ENCODE measurements at regions of chr6 and their contacts with region 1.

Region 1: DNA sequence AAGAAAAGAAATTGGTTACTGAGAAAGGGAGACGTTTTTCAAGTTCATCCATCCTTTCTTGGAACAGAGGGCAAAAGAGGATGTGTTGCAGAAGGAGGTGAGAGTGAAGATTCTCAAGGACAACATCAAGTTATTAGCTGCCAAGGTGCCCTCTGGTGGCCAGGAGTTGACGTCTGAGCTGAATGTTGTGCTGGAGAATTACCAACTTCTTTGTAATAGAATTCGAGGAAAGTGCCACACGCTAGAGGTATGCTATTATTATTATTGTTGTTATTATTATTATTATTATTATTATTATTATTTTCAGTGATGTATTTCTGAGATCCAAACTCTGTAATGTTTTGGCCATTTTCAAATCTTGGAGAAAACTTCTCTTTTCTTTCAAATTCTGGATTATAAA is 197.0 kb downstream of the UTRN start:
- DNase-seq: peak; percentile 66
- H3K4me3 Mint-ChIP-seq: no peak overlapping the region
- H3K27ac Mint-ChIP-seq: no peak overlapping the region
- H3K4me1 Mint-ChIP-seq: no peaks in the 10 kb centered on the region
- H3K27me3 Mint-ChIP-seq: no peaks in the 10 kb centered on the region
- CTCF ChIP-seq: peak; percentile 42

Region 2: DNA sequence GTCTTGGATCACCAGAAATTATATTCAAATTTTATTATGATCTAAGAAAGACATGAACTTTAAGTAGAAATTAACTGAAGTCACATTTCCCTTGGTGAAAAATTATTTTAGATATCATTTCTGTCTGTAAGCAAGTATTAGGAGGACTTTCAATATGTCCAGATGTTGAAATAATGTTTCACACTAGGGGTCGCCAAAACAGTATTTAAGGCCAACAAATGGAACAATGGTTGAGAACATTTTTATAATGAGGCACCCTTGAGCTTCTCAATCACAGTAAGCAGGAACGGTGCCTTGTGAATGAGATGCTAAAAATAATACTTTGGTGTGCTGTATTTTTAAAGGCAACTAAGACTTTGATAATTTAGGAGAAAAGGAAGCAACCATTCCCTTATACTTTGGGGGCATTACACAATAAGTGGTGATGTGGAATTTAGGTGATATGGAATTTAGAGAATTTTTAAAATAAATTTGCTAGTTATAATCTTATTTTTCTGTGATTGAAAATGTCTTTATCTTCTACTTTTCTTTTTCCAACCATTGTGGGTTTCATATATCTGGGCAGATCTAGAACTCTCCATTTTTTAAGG is 377.1 kb before region 1 on chr6:
- CTCF ChIA-PET with region 1: interaction called, 7 read pairs
- intact Hi-C with region 1: loop called (anchors 2 kb)
- DNase-seq: peak; percentile 48
- H3K4me3 Mint-ChIP-seq: no peak overlapping the region
- H3K27ac Mint-ChIP-seq: peak overlapping the region; percentile 56
- H3K4me1 Mint-ChIP-seq: peaks cover 8% of the 10 kb centered on the region
- H3K27me3 Mint-ChIP-seq: no peaks in the 10 kb centered on the region
- CTCF ChIP-seq: no peak

Region 3: DNA sequence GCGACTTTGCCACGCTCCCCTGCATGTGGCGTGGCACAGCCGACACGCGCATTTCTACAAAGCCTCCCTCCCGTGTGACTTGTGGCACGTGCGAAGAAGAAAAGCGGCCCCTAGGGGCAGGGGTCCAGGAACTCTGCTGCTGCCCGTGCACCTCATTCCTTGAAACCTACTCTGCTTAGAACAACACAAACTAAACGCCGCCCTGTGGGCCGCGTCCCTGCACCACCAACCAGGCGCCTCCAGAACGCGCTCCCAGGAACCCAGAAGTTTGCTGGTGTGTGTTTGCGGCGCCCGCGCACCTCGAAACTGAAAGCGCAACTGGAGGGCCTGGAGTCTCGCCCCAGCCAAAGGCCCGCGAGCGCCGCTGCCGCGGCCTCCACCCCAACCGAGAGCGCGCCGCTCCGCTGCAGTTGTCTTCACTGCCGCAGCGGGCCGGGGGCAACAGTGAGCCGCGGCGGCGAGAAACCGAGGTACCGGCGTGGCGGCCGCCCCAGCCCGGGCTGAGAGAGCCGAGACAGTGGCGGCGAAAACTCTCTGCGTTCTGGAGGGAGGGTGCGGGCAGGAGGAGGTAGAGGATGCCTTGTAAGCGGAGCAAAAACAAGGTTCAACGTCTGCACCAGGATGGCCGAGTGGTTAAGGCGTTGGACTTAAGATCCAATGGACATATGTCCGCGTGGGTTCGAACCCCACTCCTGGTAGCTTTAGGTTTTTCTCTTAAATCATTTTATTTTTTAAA is 266.0 kb before region 1 on chr6:
- CTCF ChIA-PET with region 1: interaction called, 5 read pairs
- intact Hi-C with region 1: loop called (anchors 5 kb)
- DNase-seq: peak; percentile 89
- H3K4me3 Mint-ChIP-seq: peak overlapping the region; percentile 80
- H3K27ac Mint-ChIP-seq: peak overlapping the region; percentile 99
- H3K4me1 Mint-ChIP-seq: peaks cover 16% of the 10 kb centered on the region
- H3K27me3 Mint-ChIP-seq: peaks cover under 1% of the 10 kb centered on the region
- CTCF ChIP-seq: peak; percentile 52

Region 4: GRCh38 chr6:144265390-144265789 is 216.8 kb before region 1 on chr6:
- CTCF ChIA-PET with region 1: no interaction called
- intact Hi-C with region 1: loop called (anchors 10 kb)
- DNase-seq: peak; percentile 24
- H3K4me3 Mint-ChIP-seq: no peak overlapping the region
- H3K27ac Mint-ChIP-seq: peak overlapping the region; percentile 85
- H3K4me1 Mint-ChIP-seq: peaks cover 10% of the 10 kb centered on the region
- H3K27me3 Mint-ChIP-seq: no peaks in the 10 kb centered on the region
- CTCF ChIP-seq: no peak

Region 5: DNA sequence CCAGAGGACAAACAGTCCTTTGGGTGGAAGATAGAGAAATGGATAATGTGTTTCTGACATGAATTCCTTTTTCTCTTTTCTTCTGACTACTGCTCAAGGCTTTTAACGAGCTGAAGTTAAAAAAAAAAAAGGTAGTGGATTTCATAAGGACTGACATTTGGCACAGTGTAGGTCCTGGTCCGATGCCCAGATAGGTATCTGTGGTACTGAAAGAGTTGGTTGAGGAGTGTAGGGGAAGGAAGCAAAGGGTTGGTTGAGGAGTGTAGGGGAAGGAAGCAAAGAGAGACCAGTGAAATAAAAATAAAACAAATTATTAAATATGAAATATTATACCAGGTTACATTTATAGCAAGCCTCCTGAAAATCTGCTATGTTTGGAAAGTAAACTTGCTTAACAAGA is 185.2 kb before region 1 on chr6:
- CTCF ChIA-PET with region 1: no interaction called
- intact Hi-C with region 1: loop called (anchors 5 kb)
- DNase-seq: no peak
- H3K4me3 Mint-ChIP-seq: peak overlapping the region; percentile 43
- H3K27ac Mint-ChIP-seq: peak overlapping the region; percentile 77
- H3K4me1 Mint-ChIP-seq: peaks cover 23% of the 10 kb centered on the region
- H3K27me3 Mint-ChIP-seq: no peaks in the 10 kb centered on the region
- CTCF ChIP-seq: no peak

Measured in Calu3 (cell line).